Left colon (tissue), 2 donors: ENCODE measurements at regions of chr7 and their contacts with region 1.

Region 1: DNA sequence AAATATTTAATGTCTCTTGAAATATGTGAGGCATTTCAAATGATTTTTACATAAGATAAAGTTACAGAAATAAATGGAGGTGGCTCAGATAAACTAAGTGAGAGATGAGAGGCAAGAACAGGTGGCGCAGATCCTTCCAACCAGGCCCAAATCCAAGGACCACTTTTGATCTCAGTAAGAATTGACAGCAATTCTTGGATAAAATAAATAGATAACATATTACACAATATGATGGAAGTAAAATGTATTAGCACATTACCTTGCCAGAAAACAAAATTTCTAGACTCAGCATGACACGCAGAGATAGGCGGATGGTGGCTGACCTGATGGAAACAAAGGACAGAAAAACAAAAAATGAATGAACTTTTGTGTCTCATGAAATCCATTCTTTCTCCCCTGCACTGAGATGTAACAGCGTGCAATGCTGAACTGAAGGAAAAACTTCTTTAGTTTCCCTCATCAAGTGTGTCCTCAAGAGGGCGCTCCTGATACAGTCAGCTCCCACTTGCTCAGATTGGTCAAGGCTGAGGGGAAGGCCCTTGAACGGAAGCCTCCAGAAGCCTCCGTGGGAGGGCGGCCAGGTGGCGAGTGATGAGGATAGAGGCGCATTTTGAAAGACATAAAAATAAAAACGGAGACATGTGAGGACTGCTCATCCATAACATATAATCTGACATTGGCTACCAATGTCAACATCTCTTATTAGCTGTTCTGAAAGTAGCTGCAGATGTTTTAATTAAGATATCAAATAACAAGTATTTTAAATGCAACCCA is 62.8 kb upstream of the GSDME start:
- DNase-seq: peak; percentile 84 to 89
- ATAC-seq: peak; percentile 81

Region 2: GRCh38 chr7:24979863-24980533 is 159.9 kb after region 1 on chr7 and contains the start of gene OSBPL3:
- intact Hi-C with region 1: loop called in 1 of 2 experiments (anchors 5 kb)
- DNase-seq: peak; percentile 95 to 96
- ATAC-seq: peak; percentile 92
- total RNA-seq, gene OSBPL3: 11.0 to 13.2 TPM

Region 3: DNA sequence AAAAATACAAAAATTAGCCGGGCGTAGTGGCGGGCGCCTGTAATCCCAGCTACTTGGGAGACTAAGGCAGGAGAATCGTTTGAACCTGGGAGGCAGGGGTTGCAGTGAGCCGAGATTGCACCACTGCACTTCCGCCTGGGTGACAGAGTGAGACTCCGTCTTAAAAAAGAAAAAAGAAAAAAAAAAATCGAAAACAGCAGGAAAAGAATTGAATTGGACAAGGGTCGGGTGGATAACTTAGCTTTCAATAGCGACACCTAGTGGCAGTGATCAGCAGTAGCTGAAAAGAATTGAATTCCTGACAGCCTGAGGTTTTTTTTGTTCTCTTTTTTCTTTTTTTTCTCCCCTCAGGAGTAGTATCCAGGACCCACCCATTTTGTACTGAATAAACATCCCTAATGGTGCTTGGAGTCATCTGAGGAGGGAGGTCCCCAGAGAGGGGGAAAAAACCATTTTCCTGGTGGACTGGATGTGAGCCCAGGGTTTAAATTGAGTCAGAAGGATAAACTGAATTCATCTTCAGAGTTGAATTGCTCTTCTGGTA is 249.9 kb after region 1 on chr7:
- intact Hi-C with region 1: loop called (anchors 5 to 10 kb)
- DNase-seq: peak; percentile 28 to 31
- ATAC-seq: peak; percentile 59

Region 4: GRCh38 chr7:25109276-25109675 is 289.2 kb after region 1 on chr7:
- intact Hi-C with region 1: no loop called
- DNase-seq: no peak
- ATAC-seq: no peak